ENCODE measurements at regions of chr14 and their contacts with region 1.

Region 1: DNA sequence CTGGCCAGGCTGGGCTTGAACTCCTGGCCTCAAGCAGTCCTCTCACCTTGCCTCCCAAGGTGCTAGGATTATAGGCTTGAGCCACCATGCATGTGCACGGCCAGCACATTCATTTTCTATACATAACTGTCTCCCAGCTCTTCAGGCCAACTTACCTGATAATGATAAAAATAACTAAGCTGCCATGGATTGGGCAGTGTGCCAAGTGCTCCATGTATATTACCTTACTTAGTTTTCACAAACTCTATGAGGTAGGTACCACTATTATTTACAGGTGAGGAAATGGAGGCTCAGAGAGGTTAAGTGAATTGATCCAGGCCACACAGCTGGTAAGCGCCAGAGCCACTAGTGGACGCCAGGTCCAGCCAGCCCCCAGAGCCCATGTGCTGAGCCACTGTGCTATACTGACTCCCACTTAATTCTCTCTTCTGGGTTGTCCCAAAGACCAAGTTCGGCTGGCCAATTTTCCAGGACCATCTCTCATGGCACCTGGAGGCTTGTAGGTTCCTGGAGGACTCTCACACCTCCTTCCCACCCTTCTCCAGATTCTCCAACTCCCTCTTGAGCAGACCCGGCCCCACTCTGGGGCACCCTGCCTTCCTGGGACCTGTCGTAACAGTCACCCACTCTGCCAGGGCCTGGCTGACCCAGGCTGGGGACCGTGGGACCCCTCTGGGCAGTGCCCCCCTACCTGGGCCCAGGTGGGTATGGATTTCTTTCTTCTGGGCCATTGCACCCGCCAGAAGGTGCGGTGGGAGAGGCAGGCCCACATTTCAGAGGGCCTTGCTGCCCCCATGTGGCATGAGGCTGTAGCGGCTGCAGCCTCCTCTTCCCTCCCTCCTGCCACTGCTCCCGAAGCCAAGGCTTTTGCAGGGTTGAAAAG is 30.2 kb upstream of the CIPC start:
- DNase-seq: peak in 1 of 2 donors; percentile 84
- H3K4me3 ChIP-seq: no peak overlapping the region
- H3K27ac ChIP-seq: no peak overlapping the region
- H3K4me1 ChIP-seq: peaks cover 0 to 5% of the 10 kb centered on the region in 2 donors
- H3K27me3 ChIP-seq: no peaks in the 10 kb centered on the region
- CTCF ChIP-seq: peak; percentile 76 to 93 (median 88)

Region 2: DNA sequence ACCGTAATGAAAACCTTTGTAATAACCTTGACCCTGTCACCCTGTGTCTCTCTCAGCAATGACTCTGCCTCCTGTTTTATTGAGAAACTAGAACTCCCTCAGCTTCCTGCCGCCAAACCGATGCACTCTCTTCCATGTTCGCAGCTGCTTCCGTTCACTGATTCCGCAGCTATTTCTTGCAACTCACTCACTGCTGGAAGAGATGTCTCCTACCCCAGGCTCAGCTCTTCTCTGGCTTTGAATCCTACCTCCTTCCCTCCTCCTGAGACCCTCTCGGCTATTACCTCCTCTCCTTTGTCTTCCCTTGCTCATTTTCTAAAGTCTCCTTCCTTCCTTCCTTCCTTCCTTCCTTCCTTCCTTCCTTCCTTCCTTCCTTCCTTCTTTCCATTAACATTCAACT is 621.0 kb before region 1 on chr14:
- intact Hi-C with region 1: no loop called
- DNase-seq: no peak
- H3K4me3 ChIP-seq: no peak overlapping the region
- H3K27ac ChIP-seq: no peak overlapping the region
- H3K4me1 ChIP-seq: no peaks in the 10 kb centered on the region
- H3K27me3 ChIP-seq: no peaks in the 10 kb centered on the region
- CTCF ChIP-seq: no peak

Region 3: DNA sequence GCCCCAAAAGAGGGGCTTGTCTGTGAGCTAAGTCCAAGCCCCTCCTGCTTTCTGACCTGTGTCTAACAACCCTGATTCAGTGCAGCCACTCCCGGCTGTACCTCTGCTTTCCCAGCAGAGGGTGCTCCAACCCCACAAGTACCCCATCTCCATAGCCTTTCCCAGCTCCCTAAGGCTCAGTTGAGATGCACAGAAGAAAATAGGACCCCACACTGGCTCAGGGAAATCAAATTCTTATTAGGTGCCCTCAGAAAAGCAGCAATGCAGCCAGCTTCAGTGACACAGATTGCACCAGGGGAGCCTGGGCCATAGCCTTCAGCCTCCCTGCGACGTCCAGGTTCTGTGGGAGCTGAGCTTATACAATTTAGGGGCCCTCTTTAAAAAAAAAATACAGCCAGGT is 191.8 kb before region 1 on chr14:
- intact Hi-C with region 1: loop called (anchors 1 kb)
- DNase-seq: no peak
- H3K4me3 ChIP-seq: no peak overlapping the region
- H3K27ac ChIP-seq: no peak overlapping the region
- H3K4me1 ChIP-seq: no peaks in the 10 kb centered on the region
- H3K27me3 ChIP-seq: no peaks in the 10 kb centered on the region
- CTCF ChIP-seq: peak; percentile 91 to 93 (median 91)

Region 4: GRCh38 chr14:76977793-76978720 is 89.8 kb before region 1 on chr14:
- intact Hi-C with region 1: no loop called
- DNase-seq: peak; percentile 60 to 77
- H3K4me3 ChIP-seq: no peak overlapping the region
- H3K27ac ChIP-seq: no peak overlapping the region
- H3K4me1 ChIP-seq: peaks cover 2 to 7% of the 10 kb centered on the region in 2 donors
- H3K27me3 ChIP-seq: no peaks in the 10 kb centered on the region
- CTCF ChIP-seq: no peak

Region 5: GRCh38 chr14:77007975-77008421 is 59.9 kb before region 1 on chr14:
- intact Hi-C with region 1: loop called (anchors 5 kb)
- DNase-seq: peak; percentile 47 to 91
- H3K4me3 ChIP-seq: no peak overlapping the region
- H3K27ac ChIP-seq: peak overlapping the region; percentile 69 to 80
- H3K4me1 ChIP-seq: peaks cover 18 to 37% of the 10 kb centered on the region in 2 donors
- H3K27me3 ChIP-seq: no peaks in the 10 kb centered on the region
- CTCF ChIP-seq: no peak

Region 6: GRCh38 chr14:77040059-77040740 is 27.7 kb before region 1 on chr14:
- intact Hi-C with region 1: loop called (anchors 1 kb)
- DNase-seq: peak; percentile 90 to 98
- H3K4me3 ChIP-seq: peak overlapping the region; percentile 1 to 59
- H3K27ac ChIP-seq: peak overlapping the region; percentile 78 to 88
- H3K4me1 ChIP-seq: peaks cover 26 to 71% of the 10 kb centered on the region in 2 donors
- H3K27me3 ChIP-seq: no peaks in the 10 kb centered on the region
- CTCF ChIP-seq: no peak

Region 7: DNA sequence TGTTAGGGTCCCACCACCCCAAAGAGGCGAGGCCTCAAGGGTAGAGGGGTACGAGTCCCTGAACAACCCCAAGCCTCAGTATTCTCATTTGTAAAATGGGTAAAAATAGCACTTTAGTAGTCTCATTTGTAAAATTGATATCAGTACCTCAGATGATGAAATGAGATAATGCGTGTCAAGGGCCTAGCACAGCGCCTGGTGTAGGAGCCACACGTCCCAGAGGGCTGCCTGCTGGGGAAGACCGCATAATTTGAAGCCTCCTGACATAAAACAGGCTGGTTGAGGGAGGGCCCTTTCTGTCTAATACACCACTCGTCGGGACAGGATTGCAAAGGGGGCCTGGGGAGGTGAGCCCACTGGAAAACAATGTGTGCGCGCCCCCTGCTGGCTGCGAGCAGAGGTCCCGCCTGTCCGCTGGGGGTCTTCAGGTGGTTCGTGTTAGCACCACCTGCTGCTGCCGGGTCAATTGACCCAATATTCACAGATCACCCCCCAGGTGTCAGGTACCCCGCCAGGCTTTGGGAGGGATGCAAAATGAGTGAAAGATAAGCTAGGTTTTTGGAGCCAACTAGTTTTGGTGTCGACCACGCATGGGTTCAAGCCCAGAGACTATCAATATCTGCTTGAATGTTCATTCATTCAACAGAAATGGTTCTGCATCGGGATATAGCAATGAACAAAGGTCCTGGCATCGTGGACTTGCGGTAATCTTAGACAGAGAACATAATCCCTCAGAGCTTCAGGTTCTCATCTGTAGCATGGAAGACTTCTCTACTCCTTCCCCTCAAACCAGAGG is 14.6 kb before region 1 on chr14:
- intact Hi-C with region 1: loop called (anchors 2 kb)
- DNase-seq: peak in 1 of 2 donors; percentile 84
- H3K4me3 ChIP-seq: no peak overlapping the region
- H3K27ac ChIP-seq: peak overlapping the region; percentile 72 to 79
- H3K4me1 ChIP-seq: peaks cover 0 to 17% of the 10 kb centered on the region in 2 donors
- H3K27me3 ChIP-seq: no peaks in the 10 kb centered on the region
- CTCF ChIP-seq: peak; percentile 83 to 93 (median 89)